Panc1 (cell line): ENCODE measurements at regions of chr1 and their contacts with region 1.

Region 1: DNA sequence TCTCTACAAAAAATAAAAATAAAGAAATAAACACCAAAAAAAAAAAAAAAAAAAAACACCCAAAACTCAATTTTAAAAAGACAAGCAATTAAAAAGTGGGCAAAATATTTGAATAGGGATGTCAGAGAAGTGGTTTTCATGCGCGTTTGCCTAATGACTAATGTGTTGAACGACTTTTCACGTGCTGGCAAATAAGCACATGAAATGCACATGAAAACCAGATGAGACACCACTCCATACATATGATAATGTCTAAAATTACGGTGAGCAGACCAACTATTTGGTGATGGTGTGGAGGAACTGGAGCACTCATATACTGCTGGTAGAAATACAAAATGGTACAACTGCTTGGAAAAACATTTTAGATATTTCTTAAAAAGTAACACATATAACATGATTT is 39.4 kb upstream of the UHMK1 start:
- DNase-seq: no peak
- ATAC-seq: no peak
- H3K4me3 ChIP-seq: no peak overlapping the region
- H3K27ac ChIP-seq: no peak overlapping the region
- H3K4me1 ChIP-seq: no peaks in the 10 kb centered on the region
- H3K27me3 ChIP-seq: no peaks in the 10 kb centered on the region
- CTCF ChIP-seq: no peak

Region 2: DNA sequence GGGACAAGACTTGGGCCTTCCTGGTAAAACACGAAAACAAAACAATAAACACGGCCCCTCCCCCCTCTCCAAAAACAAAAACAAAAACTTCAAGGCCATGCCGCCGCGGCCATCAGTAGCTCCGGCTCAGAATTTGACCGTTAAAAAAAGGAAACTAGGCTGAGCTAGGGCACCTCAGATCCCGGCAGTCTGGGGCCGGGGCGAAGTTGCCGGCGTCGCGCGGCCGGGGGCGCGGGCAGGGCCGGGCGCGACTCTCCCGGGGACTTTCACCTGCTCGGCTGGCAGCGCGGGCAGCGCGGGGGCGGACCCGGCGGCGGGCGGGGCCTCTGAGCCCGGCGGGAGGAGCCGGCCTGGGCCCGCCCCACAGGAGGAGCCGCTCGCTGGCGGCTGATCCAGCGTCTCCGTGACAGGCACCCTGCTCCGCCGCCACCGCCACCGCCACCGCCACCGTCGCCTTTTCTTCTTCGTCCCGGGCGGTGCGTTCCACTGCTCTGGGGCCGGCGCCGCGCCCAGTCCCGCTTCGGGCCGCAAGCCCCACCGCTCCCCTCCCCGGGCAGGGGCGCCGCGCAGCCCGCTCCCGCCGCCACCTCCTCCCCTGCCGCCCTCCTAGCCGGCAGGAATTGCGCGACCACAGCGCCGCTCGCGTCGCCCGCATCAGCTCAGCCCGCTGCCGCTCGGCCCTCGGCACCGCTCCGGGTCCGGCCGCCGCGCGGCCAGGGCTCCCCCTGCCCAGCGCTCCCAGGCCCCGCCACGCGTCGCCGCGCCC is 388.7 kb before region 1 on chr1 and contains the start of gene NOS1AP:
- CTCF ChIA-PET with region 1: no interaction called
- POLR2A ChIA-PET with region 1: no interaction called
- in situ Hi-C with region 1: no loop called
- intact Hi-C with region 1: no loop called
- DNase-seq: no peak
- ATAC-seq: peak; percentile 94
- H3K4me3 ChIP-seq: peak within 1 kb of the TSS; percentile 84 to 85
- H3K27ac ChIP-seq: peak within 1 kb of the TSS; percentile 95
- H3K4me1 ChIP-seq: peaks cover 45% of the 10 kb centered on the region
- H3K27me3 ChIP-seq: no peaks in the 10 kb centered on the region
- CTCF ChIP-seq: peak; percentile 22; the same call in 1 of the 2 replicates
- total RNA-seq, gene NOS1AP: 27.9 TPM

Region 3: DNA sequence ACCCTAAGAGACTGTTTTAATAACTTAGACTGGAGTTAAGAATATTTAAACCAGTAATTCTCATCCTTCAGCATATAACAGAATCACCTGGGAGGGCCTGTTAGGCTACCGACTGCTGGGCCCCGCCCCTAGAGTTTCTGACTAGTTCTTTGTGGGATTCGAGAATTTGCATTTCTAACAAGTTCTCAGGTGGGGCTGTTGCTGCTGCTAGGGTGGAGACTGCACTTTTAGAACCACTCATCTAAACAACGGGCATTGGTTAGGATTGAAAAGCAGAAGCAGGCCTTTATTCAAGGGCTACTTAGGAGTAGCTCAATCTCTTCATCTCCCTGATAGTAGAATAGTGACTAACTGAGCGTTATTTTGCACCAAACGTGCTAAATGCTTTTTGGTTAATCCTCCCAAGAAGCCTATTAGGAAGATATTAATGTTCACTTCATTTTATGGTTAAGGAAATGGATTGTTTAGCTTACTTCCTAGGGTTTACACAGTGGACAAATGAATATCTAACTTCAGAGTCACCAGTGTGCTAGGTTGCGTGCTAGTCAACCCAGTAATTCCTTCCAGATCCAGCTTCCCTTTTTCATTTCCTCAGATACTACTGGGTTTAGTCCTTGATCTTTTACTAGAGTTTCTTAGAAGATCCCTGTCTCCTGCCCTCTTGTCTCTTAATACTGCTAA is 72.2 kb after region 1 on chr1:
- CTCF ChIA-PET with region 1: no interaction called
- POLR2A ChIA-PET with region 1: no interaction called
- in situ Hi-C with region 1: no loop called
- intact Hi-C with region 1: no loop called
- DNase-seq: no peak
- ATAC-seq: no peak
- H3K4me3 ChIP-seq: no peak overlapping the region
- H3K27ac ChIP-seq: no peak overlapping the region
- H3K4me1 ChIP-seq: no peaks in the 10 kb centered on the region
- H3K27me3 ChIP-seq: no peaks in the 10 kb centered on the region
- CTCF ChIP-seq: no peak

Region 4: DNA sequence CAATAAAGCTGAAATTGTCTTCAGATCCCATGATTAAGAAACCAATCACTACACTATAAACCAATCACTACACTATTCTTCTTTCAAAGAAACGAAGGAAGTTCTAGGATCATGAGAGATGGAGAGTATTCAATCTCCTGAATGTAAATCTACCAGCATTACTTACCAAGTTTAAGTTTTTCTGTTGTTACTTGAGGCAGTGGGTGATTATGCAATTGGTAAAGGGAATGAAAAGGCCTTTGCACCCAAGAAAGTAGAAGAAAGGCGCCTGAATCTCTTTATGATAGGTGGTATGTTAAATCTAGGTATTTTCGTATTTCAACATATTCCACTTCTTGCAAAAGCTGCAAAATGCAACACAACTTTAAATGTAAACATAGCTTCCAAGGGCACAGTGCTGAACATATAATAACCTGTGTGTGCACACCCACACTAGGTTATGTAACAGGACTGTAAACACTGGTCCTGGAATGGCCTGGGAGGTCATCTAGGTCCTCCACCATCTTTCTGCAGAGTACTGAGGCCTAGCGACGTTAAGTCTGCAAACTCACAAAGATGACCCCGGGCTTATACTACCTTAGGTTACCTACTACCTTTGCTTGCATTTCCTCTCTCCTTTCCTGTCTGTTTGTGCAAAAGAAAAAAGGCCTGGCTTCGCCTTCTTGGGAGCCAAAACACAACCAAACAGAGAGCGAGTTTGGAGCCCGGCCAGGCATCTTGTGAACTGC is 102.2 kb after region 1 on chr1:
- CTCF ChIA-PET with region 1: interaction called, 11 read pairs
- POLR2A ChIA-PET with region 1: no interaction called
- in situ Hi-C with region 1: no loop called
- intact Hi-C with region 1: no loop called
- DNase-seq: no peak
- ATAC-seq: no peak
- H3K4me3 ChIP-seq: peak overlapping the region; percentile 87 to 95
- H3K27ac ChIP-seq: peak overlapping the region; percentile 90
- H3K4me1 ChIP-seq: peaks cover 21% of the 10 kb centered on the region
- H3K27me3 ChIP-seq: no peaks in the 10 kb centered on the region
- CTCF ChIP-seq: no peak